MCF 10A (cell line): ENCODE measurements at regions of chr6 and their contacts with region 1.

Region 1: GRCh38 chr6:41735427-41736356 is at the start of gene TFEB:
- DNase-seq: peak; percentile 88
- H3K4me3 Mint-ChIP-seq: peak within 1 kb of the TSS; percentile 62
- H3K27ac Mint-ChIP-seq: no peak within 1 kb of the TSS
- H3K4me1 Mint-ChIP-seq: peaks cover 17% of the 10 kb centered on the region
- H3K27me3 Mint-ChIP-seq: no peaks in the 10 kb centered on the region
- CTCF ChIP-seq: peak; percentile 86
- total RNA-seq, gene TFEB: 11.8 and 16.2 TPM in 2 replicates

Region 2: DNA sequence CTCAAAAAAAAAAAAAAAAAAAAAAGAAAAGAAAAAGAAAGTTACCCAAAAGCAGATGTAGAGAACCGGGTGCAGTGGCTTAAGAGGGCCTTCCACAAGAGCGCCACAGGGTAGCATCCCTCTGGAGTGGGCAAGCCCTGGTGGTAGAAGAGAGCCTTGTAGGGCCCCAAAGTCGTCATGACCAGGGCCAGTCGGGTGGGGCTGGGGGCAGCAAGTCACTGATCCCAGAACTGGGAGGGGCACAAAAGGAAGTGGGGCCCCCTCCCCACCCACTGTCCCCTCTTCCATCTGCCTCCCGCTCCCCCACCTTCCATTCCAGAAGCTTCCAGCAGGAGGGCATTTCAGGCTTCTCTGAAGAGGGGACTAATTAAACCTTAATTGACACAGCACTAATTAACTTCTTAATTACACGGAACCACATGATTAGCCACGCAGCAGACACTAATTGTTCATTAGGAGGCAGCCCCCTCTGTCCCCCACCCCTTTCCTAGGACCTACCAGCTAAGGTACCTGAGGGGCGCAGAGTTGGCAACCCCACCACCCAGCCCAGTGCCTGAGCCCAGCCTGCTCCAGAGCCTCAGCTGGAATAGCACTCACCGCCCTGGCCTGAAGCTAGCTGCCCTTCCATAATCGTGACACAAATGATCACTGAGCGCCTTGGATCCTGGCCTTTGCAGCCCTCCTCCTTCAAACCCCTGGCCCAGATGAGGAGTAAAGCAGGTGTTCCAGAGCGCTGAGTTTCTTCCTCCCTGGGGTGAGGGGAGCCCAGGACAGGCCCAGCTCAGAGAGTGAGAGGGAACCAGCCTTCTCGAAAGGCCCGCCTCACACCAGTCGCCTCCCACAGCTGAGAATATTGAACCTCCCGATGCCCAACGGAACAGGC is 62.6 kb before region 1 on chr6:
- CTCF ChIA-PET with region 1: no interaction called
- POLR2A ChIA-PET with region 1: no interaction called
- intact Hi-C with region 1: no loop called
- DNase-seq: no peak
- H3K4me3 Mint-ChIP-seq: no peak overlapping the region
- H3K27ac Mint-ChIP-seq: no peak overlapping the region
- H3K4me1 Mint-ChIP-seq: no peaks in the 10 kb centered on the region
- H3K27me3 Mint-ChIP-seq: peaks cover 31% of the 10 kb centered on the region
- CTCF ChIP-seq: no peak

Region 3: DNA sequence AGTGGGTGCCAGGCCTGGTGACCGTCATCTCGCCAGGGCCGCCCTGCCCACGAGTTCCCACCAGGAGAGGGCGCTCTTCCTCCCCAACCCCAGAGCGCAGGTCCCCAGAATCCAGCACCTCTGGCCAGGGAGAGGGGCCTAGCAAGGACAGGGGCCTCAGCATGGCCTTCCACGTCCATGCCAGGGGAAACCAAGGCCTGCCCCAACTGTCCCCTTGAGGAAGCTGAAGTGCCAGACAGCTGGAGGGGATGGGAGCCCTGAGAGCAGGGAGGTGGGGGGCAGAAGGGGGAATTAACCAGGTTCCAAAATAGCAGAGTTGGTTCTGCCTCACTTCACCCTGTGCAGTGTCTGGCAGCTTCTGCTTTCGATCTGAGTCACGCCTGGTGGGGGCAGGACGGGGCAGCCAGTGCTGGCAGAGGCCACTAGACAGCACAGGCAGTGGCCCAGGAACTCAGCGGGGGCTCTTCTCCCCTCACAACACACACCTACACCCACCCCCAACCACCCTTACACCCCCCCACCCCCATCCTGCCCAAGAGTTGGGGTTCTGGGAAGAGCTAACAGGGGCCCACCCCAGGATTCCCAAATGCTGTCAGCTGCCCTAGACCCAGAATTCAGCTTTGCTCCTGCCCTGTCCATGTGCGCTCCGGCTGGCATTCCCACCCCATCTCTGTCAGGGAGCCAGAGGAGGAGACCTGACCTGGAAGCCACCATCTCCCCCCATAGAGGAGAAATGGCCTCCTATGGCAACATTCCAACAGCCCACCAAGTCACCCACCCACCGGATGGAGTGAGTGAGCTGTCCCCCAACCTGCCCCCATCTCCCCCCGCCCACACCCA is 29.5 kb before region 1 on chr6:
- CTCF ChIA-PET with region 1: interaction called, 25 read pairs
- POLR2A ChIA-PET with region 1: interaction called, 9 read pairs
- intact Hi-C with region 1: loop called (anchors 1 kb)
- DNase-seq: peak; percentile 79
- H3K4me3 Mint-ChIP-seq: peak overlapping the region; percentile 46
- H3K27ac Mint-ChIP-seq: peak overlapping the region; percentile 84
- H3K4me1 Mint-ChIP-seq: peaks cover 36% of the 10 kb centered on the region
- H3K27me3 Mint-ChIP-seq: no peaks in the 10 kb centered on the region
- CTCF ChIP-seq: peak; percentile 73

Region 4: DNA sequence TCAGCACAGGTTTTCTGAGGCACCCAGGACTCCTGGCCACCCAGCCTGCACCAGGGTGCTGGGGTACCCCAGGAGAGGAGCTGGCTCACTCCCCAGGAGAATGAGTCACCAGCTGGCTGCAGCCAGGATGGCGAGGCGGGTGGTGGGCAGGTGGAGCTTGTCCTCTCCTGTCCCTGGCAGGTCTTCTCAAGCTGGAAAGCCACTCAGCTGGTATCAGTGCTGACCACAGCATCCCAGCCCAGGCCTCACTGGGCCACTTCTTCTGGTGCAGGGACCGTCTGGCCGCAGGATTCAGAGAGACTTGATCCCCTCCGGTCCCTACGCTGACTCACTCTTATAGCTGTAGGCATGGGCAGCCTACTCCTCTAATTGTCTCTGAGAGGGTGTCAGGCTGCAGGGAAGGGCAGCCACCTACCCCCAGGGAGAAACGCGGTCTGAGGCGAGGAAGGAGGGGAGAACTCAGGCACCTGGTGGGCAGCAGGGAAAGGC is 22.5 kb before region 1 on chr6:
- CTCF ChIA-PET with region 1: interaction called, 25 read pairs
- POLR2A ChIA-PET with region 1: interaction called, 98 read pairs
- intact Hi-C with region 1: loop called (anchors 1 kb)
- DNase-seq: peak; percentile 94
- H3K4me3 Mint-ChIP-seq: peak overlapping the region; percentile 7
- H3K27ac Mint-ChIP-seq: peak overlapping the region; percentile 35
- H3K4me1 Mint-ChIP-seq: peaks cover 45% of the 10 kb centered on the region
- H3K27me3 Mint-ChIP-seq: no peaks in the 10 kb centered on the region
- CTCF ChIP-seq: no peak

Region 5: GRCh38 chr6:41723530-41724227 is 12.0 kb before region 1 on chr6:
- CTCF ChIA-PET with region 1: interaction called, 4 read pairs
- POLR2A ChIA-PET with region 1: interaction called, 98 read pairs
- intact Hi-C with region 1: no loop called
- DNase-seq: peak; percentile 92
- H3K4me3 Mint-ChIP-seq: peak overlapping the region; percentile 54
- H3K27ac Mint-ChIP-seq: peak overlapping the region; percentile 94
- H3K4me1 Mint-ChIP-seq: peaks cover 41% of the 10 kb centered on the region
- H3K27me3 Mint-ChIP-seq: no peaks in the 10 kb centered on the region
- CTCF ChIP-seq: no peak

Region 6: GRCh38 chr6:41779793-41780545 is 44.3 kb after region 1 on chr6 and contains the start of gene FRS3:
- CTCF ChIA-PET with region 1: interaction called, 18 read pairs
- POLR2A ChIA-PET with region 1: interaction called, 4 read pairs
- intact Hi-C with region 1: loop called (anchors 1 kb)
- DNase-seq: peak; percentile 90
- H3K4me3 Mint-ChIP-seq: peak within 1 kb of the TSS; percentile 90
- H3K27ac Mint-ChIP-seq: no peak within 1 kb of the TSS
- H3K4me1 Mint-ChIP-seq: peaks cover 23% of the 10 kb centered on the region
- H3K27me3 Mint-ChIP-seq: no peaks in the 10 kb centered on the region
- CTCF ChIP-seq: peak; percentile 94
- total RNA-seq, gene FRS3: 3.9 and 5.3 TPM in 2 replicates

Region 7: GRCh38 chr6:41787219-41787917 is 51.7 kb after region 1 on chr6 and contains the start of gene TOMM6:
- CTCF ChIA-PET with region 1: interaction called, 18 read pairs
- POLR2A ChIA-PET with region 1: interaction called, 27 read pairs
- intact Hi-C with region 1: no loop called
- DNase-seq: peak; percentile 93
- H3K4me3 Mint-ChIP-seq: peak within 1 kb of the TSS; percentile 88
- H3K27ac Mint-ChIP-seq: peak within 1 kb of the TSS; percentile 96
- H3K4me1 Mint-ChIP-seq: peaks cover 13% of the 10 kb centered on the region
- H3K27me3 Mint-ChIP-seq: no peaks in the 10 kb centered on the region
- CTCF ChIP-seq: peak; percentile 89
- total RNA-seq, gene TOMM6: 202 and 227 TPM in 2 replicates